ENCODE measurements at regions of chr18 and their contacts with region 1.

Region 1: GRCh38 chr18:23599809-23600208 is 13.5 kb upstream of the NPC1 start:
- DNase-seq: no peak

Region 2: GRCh38 chr18:21714474-21714873 is 1885.3 kb before region 1 on chr18:
- intact Hi-C with region 1: loop called in 1 of 2 experiments (anchors 5 kb)
- DNase-seq: no peak

Region 3: DNA sequence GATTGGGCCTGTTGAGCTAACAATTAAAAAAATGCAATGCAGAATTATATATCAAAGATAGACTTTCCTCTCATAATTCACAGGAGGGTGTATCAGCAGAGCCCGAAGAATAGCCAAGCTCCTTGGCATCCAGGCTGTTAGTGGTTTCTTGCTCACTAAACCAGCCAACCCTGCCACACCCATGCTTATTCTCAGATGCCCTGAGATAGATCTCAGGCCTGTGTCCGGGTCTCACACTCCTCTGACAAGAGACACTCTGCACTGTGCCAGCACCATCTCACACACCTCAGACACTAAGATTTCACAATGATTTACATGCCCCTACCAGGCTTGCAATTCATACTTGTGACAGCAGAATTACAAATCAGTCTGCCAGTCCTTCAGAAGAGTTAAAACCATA is 733.3 kb after region 1 on chr18:
- intact Hi-C with region 1: no loop called
- DNase-seq: no peak

Measured in posterior vena cava (tissue), 2 donors.